ENCODE measurements at regions of chr9 and their contacts with region 1.

Region 1: DNA sequence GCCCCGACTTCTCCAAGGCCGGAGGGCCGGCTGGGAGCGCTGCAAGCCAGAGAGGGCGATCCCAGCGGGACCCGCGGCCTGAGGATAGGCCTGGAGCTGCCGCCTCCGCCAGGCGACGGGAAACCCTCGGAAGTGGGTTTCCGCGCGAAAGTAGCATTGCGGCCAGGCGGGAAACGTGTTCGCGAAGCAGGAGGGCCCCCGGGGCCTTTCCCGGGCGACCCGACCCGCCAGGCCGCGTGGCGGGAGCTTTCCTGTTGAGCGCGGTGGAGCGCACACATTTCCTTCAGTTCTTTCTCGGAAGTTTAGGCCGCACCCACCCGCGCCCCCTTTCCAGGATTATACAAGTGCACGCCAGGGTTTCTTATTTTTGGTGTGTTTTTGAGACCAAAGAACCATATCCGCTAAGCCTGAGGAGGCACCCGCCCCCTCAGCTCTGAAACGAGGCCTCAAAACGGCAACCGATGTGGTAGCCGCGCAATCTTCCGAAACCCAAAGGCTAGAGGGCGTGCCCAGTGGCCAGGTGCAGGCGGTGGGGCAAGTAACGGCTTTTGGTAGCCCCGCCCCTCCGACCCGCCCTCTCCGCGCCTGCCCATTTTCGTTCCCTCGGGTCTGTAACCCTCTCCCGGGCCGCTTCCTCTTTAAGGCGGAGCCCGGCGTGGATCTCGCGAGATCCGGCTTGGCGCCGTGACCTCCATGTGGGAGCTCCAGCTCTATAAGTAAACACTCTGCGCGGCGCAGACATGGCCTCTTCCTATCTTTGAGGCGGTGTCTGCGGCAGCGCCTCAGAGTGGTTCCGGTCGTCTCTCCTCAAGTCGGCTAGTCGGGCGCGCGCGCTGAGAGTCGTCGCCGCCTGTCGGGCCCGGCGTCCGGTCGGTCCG is at the start of gene UHRF2:
- DNase-seq: peak; percentile 100
- H3K4me3 Mint-ChIP-seq: peak within 1 kb of the TSS; percentile 82
- H3K27ac Mint-ChIP-seq: peak within 1 kb of the TSS; percentile 95
- H3K4me1 Mint-ChIP-seq: peaks cover 29% of the 10 kb centered on the region
- H3K27me3 Mint-ChIP-seq: no peaks in the 10 kb centered on the region
- total RNA-seq, gene UHRF2: 62.7 to 71.5 TPM

Region 2: GRCh38 chr9:5450359-5451091 is 962.2 kb before region 1 on chr9 and contains the start of gene CD274:
- CTCF ChIA-PET with region 1: no interaction called
- intact Hi-C with region 1: loop called (anchors 2 kb)
- DNase-seq: peak; percentile 83
- H3K4me3 Mint-ChIP-seq: peak within 1 kb of the TSS; percentile 89
- H3K27ac Mint-ChIP-seq: peak within 1 kb of the TSS; percentile 92
- H3K4me1 Mint-ChIP-seq: peaks cover 65% of the 10 kb centered on the region
- H3K27me3 Mint-ChIP-seq: no peaks in the 10 kb centered on the region
- total RNA-seq, gene CD274: 14.2 to 15.0 TPM

Region 3: DNA sequence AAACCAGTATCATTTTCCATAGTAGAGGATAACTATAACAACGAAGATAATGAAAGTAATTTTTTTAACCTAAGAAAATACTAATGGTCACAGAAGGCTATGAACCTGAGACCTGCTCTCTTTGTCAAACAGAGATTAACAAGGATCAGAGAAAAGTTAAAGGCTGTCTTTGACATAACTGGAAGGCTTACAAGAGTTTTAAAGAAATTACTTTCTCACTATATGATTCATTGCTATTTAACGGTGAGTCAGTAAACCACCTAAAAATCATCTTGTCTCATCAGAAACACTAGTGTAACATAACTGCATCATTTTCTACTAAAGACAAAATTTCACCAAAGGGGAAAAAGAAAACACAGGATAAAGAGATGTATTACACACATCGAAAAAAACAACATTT is 502.8 kb before region 1 on chr9:
- CTCF ChIA-PET with region 1: no interaction called
- intact Hi-C with region 1: loop called (anchors 1 kb)
- DNase-seq: no peak
- H3K4me3 Mint-ChIP-seq: peak overlapping the region; percentile 32
- H3K27ac Mint-ChIP-seq: peak overlapping the region; percentile 89
- H3K4me1 Mint-ChIP-seq: peaks cover 29% of the 10 kb centered on the region
- H3K27me3 Mint-ChIP-seq: no peaks in the 10 kb centered on the region

Region 4: GRCh38 chr9:6068983-6069382 is 343.7 kb before region 1 on chr9:
- CTCF ChIA-PET with region 1: no interaction called
- intact Hi-C with region 1: loop called (anchors 2 kb)
- DNase-seq: peak; percentile 38
- H3K4me3 Mint-ChIP-seq: peak overlapping the region; percentile 39
- H3K27ac Mint-ChIP-seq: peak overlapping the region; percentile 81
- H3K4me1 Mint-ChIP-seq: peaks cover 18% of the 10 kb centered on the region
- H3K27me3 Mint-ChIP-seq: no peaks in the 10 kb centered on the region

Region 5: GRCh38 chr9:6399071-6399470 is 13.7 kb before region 1 on chr9:
- CTCF ChIA-PET with region 1: no interaction called
- intact Hi-C with region 1: no loop called
- DNase-seq: no peak
- H3K4me3 Mint-ChIP-seq: no peak overlapping the region
- H3K27ac Mint-ChIP-seq: no peak overlapping the region
- H3K4me1 Mint-ChIP-seq: no peaks in the 10 kb centered on the region
- H3K27me3 Mint-ChIP-seq: no peaks in the 10 kb centered on the region

Region 6: GRCh38 chr9:6566409-6567139 is 153.8 kb after region 1 on chr9:
- CTCF ChIA-PET with region 1: interaction called, 3 read pairs
- intact Hi-C with region 1: loop called (anchors 1 kb)
- DNase-seq: peak; percentile 63
- H3K4me3 Mint-ChIP-seq: no peak overlapping the region
- H3K27ac Mint-ChIP-seq: peak overlapping the region; percentile 30
- H3K4me1 Mint-ChIP-seq: peaks cover 11% of the 10 kb centered on the region
- H3K27me3 Mint-ChIP-seq: no peaks in the 10 kb centered on the region

Region 7: GRCh38 chr9:6739218-6739617 is 326.5 kb after region 1 on chr9:
- CTCF ChIA-PET with region 1: no interaction called
- intact Hi-C with region 1: no loop called
- DNase-seq: no peak
- H3K4me3 Mint-ChIP-seq: no peak overlapping the region
- H3K27ac Mint-ChIP-seq: no peak overlapping the region
- H3K4me1 Mint-ChIP-seq: no peaks in the 10 kb centered on the region
- H3K27me3 Mint-ChIP-seq: no peaks in the 10 kb centered on the region

Region 8: GRCh38 chr9:6757456-6758247 is 344.9 kb after region 1 on chr9 and contains the start of gene KDM4C:
- CTCF ChIA-PET with region 1: no interaction called
- intact Hi-C with region 1: loop called (anchors 1 kb)
- DNase-seq: peak; percentile 93
- H3K4me3 Mint-ChIP-seq: peak within 1 kb of the TSS; percentile 86
- H3K27ac Mint-ChIP-seq: peak within 1 kb of the TSS; percentile 99
- H3K4me1 Mint-ChIP-seq: peaks cover 25% of the 10 kb centered on the region
- H3K27me3 Mint-ChIP-seq: no peaks in the 10 kb centered on the region
- total RNA-seq, gene KDM4C: 27.4 to 28.9 TPM